SK-N-SH (cell line): ENCODE measurements at regions of chr15 and their contacts with region 1.

Region 1: GRCh38 chr15:83248151-83249029 is 36.1 kb downstream of the BNC1 start:
- DNase-seq: peak; percentile 33
- H3K4me3 ChIP-seq: no peak overlapping the region; a peak in 1 of 4 replicates
- H3K27ac ChIP-seq: no peak overlapping the region
- H3K4me1 ChIP-seq: peaks cover 0 to 2% of the 10 kb centered on the region in 2 experiments; a peak in 1 of 4 replicates
- H3K27me3 ChIP-seq: peaks cover 23% of the 10 kb centered on the region
- CTCF ChIP-seq: peak; percentile 90
- EP300 ChIP-seq: no peak
- RAD21 ChIP-seq: peak; percentile 89

Region 2: GRCh38 chr15:82856397-82857170 is 391.8 kb before region 1 on chr15:
- CTCF ChIA-PET with region 1: no interaction called
- POLR2A ChIA-PET with region 1: no interaction called
- DNase-seq: no peak
- H3K4me3 ChIP-seq: no peak overlapping the region
- H3K27ac ChIP-seq: no peak overlapping the region
- H3K4me1 ChIP-seq: peaks cover 0 to 4% of the 10 kb centered on the region in 2 experiments; a peak in 2 of 4 replicates
- H3K27me3 ChIP-seq: no peaks in the 10 kb centered on the region
- CTCF ChIP-seq: no peak
- EP300 ChIP-seq: no peak
- RAD21 ChIP-seq: no peak

Region 3: DNA sequence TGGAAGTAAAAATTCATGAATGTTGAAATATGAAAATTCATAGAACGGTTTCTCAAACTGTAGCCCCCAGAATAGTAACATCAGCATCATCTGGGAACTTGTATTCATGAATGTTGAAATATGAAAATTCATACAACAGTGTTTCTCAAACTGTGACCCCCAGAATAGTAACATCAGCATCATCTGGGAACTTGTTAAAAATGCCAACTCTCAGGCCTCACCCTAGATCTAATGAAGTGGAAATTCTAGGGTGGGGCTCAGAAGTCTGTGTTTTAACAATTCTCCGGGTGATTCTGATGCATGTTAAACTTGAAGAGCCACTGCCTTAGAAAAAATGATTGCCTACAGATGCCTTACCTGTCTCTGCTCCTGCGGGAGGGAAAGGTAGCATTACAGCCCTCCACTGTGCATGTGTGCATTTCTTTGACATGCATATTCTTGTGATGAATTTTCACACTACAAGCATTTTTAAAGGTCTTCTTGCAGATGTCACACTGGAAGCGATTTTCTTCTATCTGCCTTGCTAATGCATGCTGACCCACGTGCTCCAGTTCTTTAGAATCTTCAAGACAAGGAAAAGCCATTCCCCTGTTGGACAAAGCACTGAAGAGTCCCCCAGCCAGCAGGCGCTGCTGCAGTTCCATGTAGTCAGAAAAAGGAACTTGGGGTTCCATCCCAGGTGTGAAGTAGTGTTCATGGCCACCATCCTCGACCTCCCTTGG is 14.4 kb after region 1 on chr15:
- CTCF ChIA-PET with region 1: interaction called, 16 read pairs
- POLR2A ChIA-PET with region 1: no interaction called
- DNase-seq: no peak
- H3K4me3 ChIP-seq: no peak overlapping the region
- H3K27ac ChIP-seq: no peak overlapping the region
- H3K4me1 ChIP-seq: no peaks in the 10 kb centered on the region
- H3K27me3 ChIP-seq: peaks cover 6% of the 10 kb centered on the region; the same call in 1 of the 2 replicates
- CTCF ChIP-seq: no peak
- EP300 ChIP-seq: no peak
- RAD21 ChIP-seq: no peak

Region 4: DNA sequence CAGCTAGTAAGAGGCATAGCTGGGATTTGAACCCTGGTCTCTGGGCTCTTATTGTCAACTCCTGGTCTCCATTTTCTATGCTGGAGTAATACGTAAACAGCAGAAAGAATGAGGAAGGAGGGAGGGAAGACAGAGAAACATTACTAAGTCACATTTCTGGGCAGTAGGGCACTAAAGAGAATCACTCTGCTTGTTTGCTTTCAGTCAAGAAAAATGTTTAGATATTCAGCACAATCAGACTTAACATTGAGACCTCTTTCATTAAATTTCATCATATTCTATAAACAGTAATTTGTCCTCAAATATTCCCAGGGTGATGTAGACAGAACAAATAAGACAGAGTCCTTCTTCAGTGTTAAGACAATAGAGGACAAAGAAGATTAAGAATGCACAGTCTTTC is 103.7 kb after region 1 on chr15:
- CTCF ChIA-PET with region 1: interaction called, 11 read pairs
- POLR2A ChIA-PET with region 1: no interaction called
- DNase-seq: no peak
- H3K4me3 ChIP-seq: no peak overlapping the region
- H3K27ac ChIP-seq: no peak overlapping the region
- H3K4me1 ChIP-seq: no peaks in the 10 kb centered on the region
- H3K27me3 ChIP-seq: peaks cover 4% of the 10 kb centered on the region; the same call in 1 of the 2 replicates
- CTCF ChIP-seq: no peak
- EP300 ChIP-seq: no peak
- RAD21 ChIP-seq: no peak

Region 5: GRCh38 chr15:83380682-83381081 is 132.3 kb after region 1 on chr15:
- CTCF ChIA-PET with region 1: interaction called, 24 read pairs
- POLR2A ChIA-PET with region 1: no interaction called
- DNase-seq: peak; percentile 64
- H3K4me3 ChIP-seq: no peak overlapping the region
- H3K27ac ChIP-seq: no peak overlapping the region
- H3K4me1 ChIP-seq: no peaks in the 10 kb centered on the region
- H3K27me3 ChIP-seq: no peaks in the 10 kb centered on the region
- CTCF ChIP-seq: peak; percentile 41
- EP300 ChIP-seq: no peak
- RAD21 ChIP-seq: peak; percentile 61

Region 6: GRCh38 chr15:83436458-83437158 is 188.2 kb after region 1 on chr15:
- CTCF ChIA-PET with region 1: interaction called, 79 read pairs
- POLR2A ChIA-PET with region 1: no interaction called
- DNase-seq: peak; percentile 42
- H3K4me3 ChIP-seq: no peak overlapping the region
- H3K27ac ChIP-seq: no peak overlapping the region
- H3K4me1 ChIP-seq: no peaks in the 10 kb centered on the region
- H3K27me3 ChIP-seq: no peaks in the 10 kb centered on the region; the same call in 1 of the 2 replicates
- CTCF ChIP-seq: peak; percentile 59
- EP300 ChIP-seq: no peak
- RAD21 ChIP-seq: peak; percentile 52

Region 7: DNA sequence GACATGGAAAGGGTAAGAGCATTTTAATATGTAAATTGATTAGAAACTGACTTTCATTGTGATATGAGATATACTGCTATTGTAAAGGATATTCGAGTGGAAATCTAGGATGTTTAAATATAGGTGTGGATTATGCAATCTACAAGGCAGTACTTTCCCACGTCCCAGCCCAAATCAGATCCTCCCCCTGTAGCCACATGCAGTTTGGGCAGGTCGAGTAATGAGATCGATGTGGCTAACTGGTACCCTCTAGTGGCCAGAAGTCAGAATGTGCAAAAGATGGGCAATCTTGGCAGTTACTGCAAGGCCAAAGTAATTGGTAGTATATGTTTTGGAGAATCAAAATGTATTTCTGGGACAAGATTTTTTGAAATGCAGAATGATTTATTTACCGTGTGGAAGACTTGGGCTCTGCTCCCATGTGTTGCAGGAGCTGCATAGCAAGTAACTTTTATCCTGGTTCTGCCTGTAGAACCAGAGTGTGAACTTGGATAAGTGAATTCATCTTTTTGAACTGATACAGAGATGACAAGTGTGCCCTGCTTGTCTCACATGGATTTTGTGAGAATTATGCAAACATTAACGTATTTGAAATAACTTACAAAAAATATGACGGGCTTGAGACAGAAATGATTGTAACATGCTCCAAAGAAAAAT is 311.0 kb after region 1 on chr15:
- CTCF ChIA-PET with region 1: interaction called, 69 read pairs
- POLR2A ChIA-PET with region 1: no interaction called
- DNase-seq: peak; percentile 66
- H3K4me3 ChIP-seq: no peak overlapping the region
- H3K27ac ChIP-seq: no peak overlapping the region
- H3K4me1 ChIP-seq: no peaks in the 10 kb centered on the region
- H3K27me3 ChIP-seq: peaks cover 14% of the 10 kb centered on the region; the same call in 1 of the 2 replicates
- CTCF ChIP-seq: peak; percentile 86
- EP300 ChIP-seq: no peak
- RAD21 ChIP-seq: peak; percentile 82